Endothelial cell of umbilical vein (primary cell): ENCODE measurements at regions of chr6 and their contacts with region 1.

Region 1: DNA sequence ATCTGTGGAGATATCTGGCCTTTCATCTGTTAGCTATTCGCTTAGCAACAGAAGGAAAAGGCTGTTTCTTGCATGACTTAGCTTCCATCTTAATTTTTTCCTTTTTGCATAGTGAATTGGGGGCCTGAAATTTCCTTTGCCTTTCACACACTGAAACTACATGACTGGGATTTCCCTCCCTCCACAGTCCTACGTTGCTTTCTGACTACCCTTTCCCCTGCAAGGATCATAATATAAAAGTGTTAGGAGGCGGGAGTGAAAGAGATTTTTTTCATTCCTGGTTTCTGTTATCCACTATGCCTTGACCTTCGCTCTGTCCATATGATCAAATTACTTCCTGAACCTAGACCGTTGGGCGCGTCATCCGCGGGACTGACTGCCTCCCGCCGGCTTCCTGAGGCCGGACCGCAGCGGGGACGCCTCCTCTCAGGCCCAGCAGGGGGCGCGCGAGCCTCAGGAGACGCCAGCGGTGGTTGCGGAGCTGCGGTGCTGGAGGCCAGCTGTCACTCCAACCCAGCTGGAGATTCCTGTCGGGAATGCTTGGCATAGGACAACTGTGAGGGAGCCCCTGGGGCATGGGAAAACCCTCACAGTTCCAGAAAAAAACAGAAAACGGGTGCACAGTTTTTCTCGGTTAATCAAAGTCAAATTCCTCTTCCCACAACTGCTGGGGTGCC is 55.6 kb downstream of the MEP1A start:
- DNase-seq: peak; percentile 82
- H3K4me3 ChIP-seq: no peak overlapping the region
- H3K27ac ChIP-seq: peak overlapping the region; percentile 54
- H3K4me1 ChIP-seq: peaks cover 31% of the 10 kb centered on the region
- H3K27me3 ChIP-seq: no peaks in the 10 kb centered on the region
- CTCF ChIP-seq: peak; percentile 97
- POLR2A ChIP-seq: no peak

Region 2: GRCh38 chr6:46419576-46420002 is 429.2 kb before region 1 on chr6:
- CTCF ChIA-PET with region 1: interaction called, 11 read pairs
- POLR2A ChIA-PET with region 1: no interaction called
- dilution Hi-C with region 1: no loop called
- intact Hi-C with region 1: loop called (anchors 2 kb)
- DNase-seq: peak; percentile 63
- H3K4me3 ChIP-seq: no peak overlapping the region
- H3K27ac ChIP-seq: no peak overlapping the region
- H3K4me1 ChIP-seq: no peaks in the 10 kb centered on the region
- H3K27me3 ChIP-seq: peaks cover 4 to 12% of the 10 kb centered on the region in 2 experiments
- CTCF ChIP-seq: peak; percentile 46 to 63
- POLR2A ChIP-seq: no peak

Region 3: DNA sequence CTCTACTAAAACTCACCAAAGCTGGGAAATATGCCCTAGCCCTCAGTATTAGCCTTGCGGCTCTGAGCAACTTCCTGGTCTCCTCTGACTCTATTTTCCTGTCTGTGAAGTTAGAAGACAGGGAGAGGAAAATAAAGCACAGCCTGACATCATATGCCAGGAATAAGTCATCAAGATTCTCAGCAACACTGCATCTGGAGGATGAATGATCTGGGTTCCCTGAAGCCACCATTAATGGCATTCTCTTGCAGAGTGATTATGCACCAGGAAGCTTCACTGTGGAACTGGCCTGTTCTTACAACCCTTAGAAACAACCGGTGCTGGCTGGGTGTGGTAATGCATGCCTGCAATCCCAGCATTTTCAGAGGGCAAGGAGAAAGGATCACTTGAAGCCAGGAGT is 60.5 kb after region 1 on chr6:
- CTCF ChIA-PET with region 1: interaction called, 4 read pairs
- POLR2A ChIA-PET with region 1: no interaction called
- dilution Hi-C with region 1: no loop called
- intact Hi-C with region 1: loop called (anchors 2 kb)
- DNase-seq: peak; percentile 93
- H3K4me3 ChIP-seq: no peak overlapping the region
- H3K27ac ChIP-seq: peak overlapping the region; percentile 88
- H3K4me1 ChIP-seq: peaks cover 32% of the 10 kb centered on the region
- H3K27me3 ChIP-seq: no peaks in the 10 kb centered on the region
- CTCF ChIP-seq: peak in 1 of 2 donors; percentile 3
- POLR2A ChIP-seq: no peak

Region 4: GRCh38 chr6:46983007-46983411 is 134.2 kb after region 1 on chr6:
- CTCF ChIA-PET with region 1: interaction called, 112 read pairs
- POLR2A ChIA-PET with region 1: no interaction called
- dilution Hi-C with region 1: no loop called
- intact Hi-C with region 1: no loop called
- DNase-seq: peak; percentile 27
- H3K4me3 ChIP-seq: no peak overlapping the region
- H3K27ac ChIP-seq: no peak overlapping the region
- H3K4me1 ChIP-seq: peaks cover 19% of the 10 kb centered on the region
- H3K27me3 ChIP-seq: no peaks in the 10 kb centered on the region
- CTCF ChIP-seq: no peak
- POLR2A ChIP-seq: no peak

Region 5: DNA sequence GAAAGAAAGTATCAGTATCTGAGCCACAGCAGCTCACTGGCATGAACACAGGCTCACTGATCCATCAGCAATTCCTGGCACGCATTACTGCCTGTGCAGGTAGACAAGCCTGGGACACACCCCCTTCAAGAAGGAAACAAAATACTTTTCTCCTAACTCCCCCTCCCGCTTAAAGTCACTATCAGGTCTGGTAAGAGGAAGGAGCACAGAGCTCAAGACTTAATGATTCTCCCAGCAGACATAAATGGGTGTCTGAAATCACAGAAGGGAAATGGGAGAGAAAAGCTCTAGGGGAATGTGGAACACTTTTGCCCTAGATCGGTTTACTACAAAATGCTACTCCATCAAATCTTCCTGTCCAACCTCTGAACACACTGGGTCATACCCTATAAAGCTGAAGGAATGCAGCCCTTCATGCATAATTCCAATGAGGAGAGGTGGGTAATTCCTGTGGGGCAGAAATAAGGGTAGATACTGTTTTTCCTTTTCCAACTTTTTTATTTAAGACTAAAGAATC is 193.5 kb after region 1 on chr6 and contains the start of gene ADGRF1:
- CTCF ChIA-PET with region 1: interaction called, 116 read pairs
- POLR2A ChIA-PET with region 1: no interaction called
- dilution Hi-C with region 1: no loop called
- intact Hi-C with region 1: loop called (anchors 1 kb)
- DNase-seq: no peak
- H3K4me3 ChIP-seq: no peak within 1 kb of the TSS
- H3K27ac ChIP-seq: no peak within 1 kb of the TSS
- H3K4me1 ChIP-seq: peaks cover 39% of the 10 kb centered on the region
- H3K27me3 ChIP-seq: no peaks in the 10 kb centered on the region
- CTCF ChIP-seq: no peak
- POLR2A ChIP-seq: no peak
- total RNA-seq, gene ADGRF1: not detected in 2 replicates

Region 6: GRCh38 chr6:47309291-47310130 is 460.7 kb after region 1 on chr6 and contains the start of gene TNFRSF21:
- CTCF ChIA-PET with region 1: interaction called, 25 read pairs
- POLR2A ChIA-PET with region 1: no interaction called
- dilution Hi-C with region 1: no loop called
- intact Hi-C with region 1: loop called (anchors 1 kb)
- DNase-seq: peak; percentile 95
- H3K4me3 ChIP-seq: peak within 1 kb of the TSS; percentile 49 to 86 (median 80)
- H3K27ac ChIP-seq: peak within 1 kb of the TSS; percentile 60
- H3K4me1 ChIP-seq: peaks cover 16% of the 10 kb centered on the region
- H3K27me3 ChIP-seq: no peaks in the 10 kb centered on the region
- CTCF ChIP-seq: peak; percentile 93 to 94
- POLR2A ChIP-seq: peak; percentile 82
- total RNA-seq, gene TNFRSF21: 40.6 and 52.3 TPM in 2 replicates